CD8-positive, alpha-beta memory T cell (primary cell): ENCODE measurements at regions of chr20 and their contacts with region 1.

Region 1: GRCh38 chr20:34111702-34112599 is at the start of gene EIF2S2:
- DNase-seq: peak; percentile 90 to 98 (median 95)
- H3K4me3 ChIP-seq: peak within 1 kb of the TSS; percentile 75
- H3K4me3 Mint-ChIP-seq: peak within 1 kb of the TSS; percentile 94 to 99 (median 96)
- H3K27ac ChIP-seq: peak within 1 kb of the TSS; percentile 92
- H3K27ac Mint-ChIP-seq: peak within 1 kb of the TSS; percentile 94 to 98 (median 96)
- H3K4me1 ChIP-seq: peaks cover 36% of the 10 kb centered on the region
- H3K4me1 Mint-ChIP-seq: peaks cover 40 to 50% (median 50%) of the 10 kb centered on the region in 3 donors
- H3K27me3 ChIP-seq: no peaks in the 10 kb centered on the region
- H3K27me3 Mint-ChIP-seq: no peaks in the 10 kb centered on the region
- total RNA-seq, gene EIF2S2: 128 to 130 TPM

Region 2: GRCh38 chr20:33810885-33811777 is 300.8 kb before region 1 on chr20 and contains the start of gene CHMP4B:
- CTCF ChIA-PET with region 1: no interaction called
- POLR2A ChIA-PET with region 1: interaction called, 14 read pairs
- DNase-seq: peak; percentile 97 to 99 (median 98)
- H3K4me3 ChIP-seq: peak within 1 kb of the TSS; percentile 82
- H3K4me3 Mint-ChIP-seq: peak within 1 kb of the TSS; percentile 92 to 100 (median 94)
- H3K27ac ChIP-seq: peak within 1 kb of the TSS; percentile 85
- H3K27ac Mint-ChIP-seq: peak within 1 kb of the TSS; percentile 37 to 100 (median 94)
- H3K4me1 ChIP-seq: peaks cover 36% of the 10 kb centered on the region
- H3K4me1 Mint-ChIP-seq: peaks cover 40 to 53% (median 46%) of the 10 kb centered on the region in 3 donors
- H3K27me3 ChIP-seq: no peaks in the 10 kb centered on the region
- H3K27me3 Mint-ChIP-seq: peaks cover 0 to 2% of the 10 kb centered on the region in 2 donors
- total RNA-seq, gene CHMP4B: 78.3 to 79.9 TPM

Region 3: GRCh38 chr20:33859157-33859695 is 252.7 kb before region 1 on chr20:
- CTCF ChIA-PET with region 1: no interaction called
- POLR2A ChIA-PET with region 1: interaction called, 13 read pairs
- DNase-seq: peak in 3 of 5 donors; percentile 20 to 58 (median 21)
- H3K4me3 ChIP-seq: peak overlapping the region; percentile 34
- H3K4me3 Mint-ChIP-seq: peak overlapping the region in 5 of 7 donors; percentile 40 to 73 (median 67)
- H3K27ac ChIP-seq: no peak overlapping the region
- H3K27ac Mint-ChIP-seq: peak overlapping the region; percentile 15 to 94 (median 88)
- H3K4me1 ChIP-seq: peaks cover 29% of the 10 kb centered on the region
- H3K4me1 Mint-ChIP-seq: peaks cover 23 to 35% (median 28%) of the 10 kb centered on the region in 3 donors
- H3K27me3 ChIP-seq: no peaks in the 10 kb centered on the region
- H3K27me3 Mint-ChIP-seq: peaks cover 0 to 5% of the 10 kb centered on the region in 2 donors

Region 4: GRCh38 chr20:33925867-33926266 is 186.1 kb before region 1 on chr20:
- CTCF ChIA-PET with region 1: no interaction called
- POLR2A ChIA-PET with region 1: no interaction called
- DNase-seq: no peak
- H3K4me3 ChIP-seq: no peak overlapping the region
- H3K4me3 Mint-ChIP-seq: no peak overlapping the region
- H3K27ac ChIP-seq: no peak overlapping the region
- H3K27ac Mint-ChIP-seq: no peak overlapping the region
- H3K4me1 ChIP-seq: no peaks in the 10 kb centered on the region
- H3K4me1 Mint-ChIP-seq: no peaks in the 10 kb centered on the region
- H3K27me3 ChIP-seq: no peaks in the 10 kb centered on the region
- H3K27me3 Mint-ChIP-seq: peaks cover 5 to 14% of the 10 kb centered on the region in 2 donors

Region 5: DNA sequence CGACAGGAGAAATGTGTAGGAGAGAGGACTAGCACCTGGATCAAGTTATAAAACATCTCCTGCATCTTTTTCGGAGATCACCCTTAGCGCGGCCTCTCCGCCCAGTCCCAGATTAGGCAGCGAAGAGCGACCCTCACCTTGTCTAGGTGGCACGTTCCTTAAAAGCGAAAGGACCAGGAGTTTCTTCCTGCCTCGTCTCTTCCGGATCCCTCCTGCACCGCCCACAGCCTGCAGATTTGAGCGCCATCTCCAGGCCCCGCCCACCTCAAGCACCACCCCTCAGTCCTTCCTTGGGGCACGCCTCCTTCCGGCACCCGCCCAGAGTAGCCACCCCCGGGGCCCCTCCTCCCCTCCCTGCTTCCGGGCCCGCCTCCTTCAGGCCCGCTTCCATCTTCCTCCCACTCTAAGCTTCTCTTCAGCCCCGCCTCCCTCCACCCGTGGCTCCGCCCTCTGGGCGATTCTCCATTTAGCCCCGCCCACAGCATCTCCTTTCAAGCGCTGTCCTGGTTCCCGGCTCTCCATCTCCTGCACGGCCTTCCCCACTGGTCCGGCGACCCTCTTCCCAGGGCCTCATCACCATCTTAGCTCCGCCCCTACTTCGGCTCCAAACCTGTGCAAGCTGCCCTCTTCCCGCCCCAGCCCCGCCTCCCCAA is 118.9 kb before region 1 on chr20:
- CTCF ChIA-PET with region 1: interaction called, 3 read pairs
- POLR2A ChIA-PET with region 1: interaction called, 22 read pairs
- DNase-seq: peak; percentile 99 to 100 (median 99)
- H3K4me3 ChIP-seq: peak overlapping the region; percentile 88
- H3K4me3 Mint-ChIP-seq: peak overlapping the region; percentile 97 to 99 (median 98)
- H3K27ac ChIP-seq: peak overlapping the region; percentile 82
- H3K27ac Mint-ChIP-seq: peak overlapping the region; percentile 96 to 99 (median 98)
- H3K4me1 ChIP-seq: peaks cover 53% of the 10 kb centered on the region
- H3K4me1 Mint-ChIP-seq: peaks cover 51 to 76% (median 71%) of the 10 kb centered on the region in 3 donors
- H3K27me3 ChIP-seq: no peaks in the 10 kb centered on the region
- H3K27me3 Mint-ChIP-seq: peaks cover 0 to 6% of the 10 kb centered on the region in 2 donors

Region 6: GRCh38 chr20:34129518-34130162 is 17.7 kb after region 1 on chr20:
- CTCF ChIA-PET with region 1: interaction called, 11 read pairs
- POLR2A ChIA-PET with region 1: no interaction called
- DNase-seq: peak; percentile 17 to 69 (median 58)
- H3K4me3 ChIP-seq: no peak overlapping the region
- H3K4me3 Mint-ChIP-seq: peak overlapping the region in 2 of 7 donors; percentile 25 to 46
- H3K27ac ChIP-seq: no peak overlapping the region
- H3K27ac Mint-ChIP-seq: peak overlapping the region in 1 of 8 donors; percentile 74
- H3K4me1 ChIP-seq: no peaks in the 10 kb centered on the region
- H3K4me1 Mint-ChIP-seq: peaks cover 3 to 4% (median 3%) of the 10 kb centered on the region in 3 donors
- H3K27me3 ChIP-seq: no peaks in the 10 kb centered on the region
- H3K27me3 Mint-ChIP-seq: peaks cover 2 to 13% of the 10 kb centered on the region in 2 donors

Region 7: GRCh38 chr20:34215711-34216381 is 103.9 kb after region 1 on chr20:
- CTCF ChIA-PET with region 1: no interaction called
- POLR2A ChIA-PET with region 1: no interaction called
- DNase-seq: peak in 1 of 5 donors; percentile 3
- H3K4me3 ChIP-seq: no peak overlapping the region
- H3K4me3 Mint-ChIP-seq: peak overlapping the region in 5 of 7 donors; percentile 33 to 71 (median 70)
- H3K27ac ChIP-seq: no peak overlapping the region
- H3K27ac Mint-ChIP-seq: peak overlapping the region in 1 of 8 donors; percentile 19
- H3K4me1 ChIP-seq: no peaks in the 10 kb centered on the region
- H3K4me1 Mint-ChIP-seq: peaks cover 6 to 14% (median 11%) of the 10 kb centered on the region in 3 donors
- H3K27me3 ChIP-seq: peaks cover 11% of the 10 kb centered on the region
- H3K27me3 Mint-ChIP-seq: peaks cover 26 to 28% of the 10 kb centered on the region in 2 donors